ENCODE measurements at regions of chr19 and their contacts with region 1.

Region 1: GRCh38 chr19:35363001-35363590 is 4.8 kb downstream of the FFAR3 start:
- DNase-seq: peak in 1 of 2 donors; percentile 67
- H3K4me3 ChIP-seq: no peak overlapping the region
- H3K27ac ChIP-seq: no peak overlapping the region
- H3K4me1 ChIP-seq: peaks cover 2% of the 10 kb centered on the region
- H3K27me3 ChIP-seq: no peaks in the 10 kb centered on the region
- CTCF ChIP-seq: no peak
- POLR2A ChIP-seq: no peak

Region 2: GRCh38 chr19:35404879-35405622 is 42.0 kb after region 1 on chr19:
- intact Hi-C with region 1: no loop called
- DNase-seq: no peak
- H3K4me3 ChIP-seq: no peak overlapping the region
- H3K27ac ChIP-seq: no peak overlapping the region
- H3K4me1 ChIP-seq: no peaks in the 10 kb centered on the region
- H3K27me3 ChIP-seq: no peaks in the 10 kb centered on the region
- CTCF ChIP-seq: no peak
- POLR2A ChIP-seq: no peak

Region 3: GRCh38 chr19:36093146-36093662 is 730.1 kb after region 1 on chr19:
- intact Hi-C with region 1: loop called (anchors 10 kb)
- DNase-seq: no peak
- H3K4me3 ChIP-seq: no peak overlapping the region
- H3K27ac ChIP-seq: no peak overlapping the region
- H3K4me1 ChIP-seq: no peaks in the 10 kb centered on the region
- H3K27me3 ChIP-seq: no peaks in the 10 kb centered on the region
- CTCF ChIP-seq: no peak
- POLR2A ChIP-seq: no peak

Measured in vagina (tissue), 2 donors.